Activated CD4-positive, alpha-beta memory T cell treated with anti-CD3 and anti-CD28 coated beads for 36 hours (primary cell): ENCODE measurements at regions of chr20 and their contacts with region 1.

Region 1: DNA sequence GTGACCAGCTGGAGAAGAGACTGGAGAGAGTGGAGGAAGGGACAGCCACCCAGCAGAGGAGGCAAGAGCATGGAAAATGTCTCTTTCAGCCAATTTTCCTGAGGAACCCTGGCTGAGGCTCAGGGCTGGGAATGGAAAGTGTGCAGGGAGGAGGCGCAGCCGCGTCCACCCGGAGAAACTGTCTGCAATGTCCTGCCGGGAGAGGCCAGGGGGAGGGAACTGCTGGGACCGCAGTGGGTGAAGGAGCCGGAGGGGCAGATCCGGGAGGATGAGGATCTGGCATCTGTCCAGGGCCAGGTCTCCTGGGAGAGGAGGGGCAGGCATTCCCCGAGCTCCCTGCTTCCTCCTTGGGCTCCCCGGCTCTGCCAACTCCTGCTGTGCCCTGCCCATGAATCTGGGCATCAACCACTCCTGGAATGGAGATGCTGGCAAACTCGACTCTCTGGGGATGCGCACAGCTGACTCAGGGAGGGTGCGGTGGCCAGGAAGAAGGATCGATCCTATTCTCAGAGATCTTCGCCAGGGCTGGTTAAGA is 17.4 kb upstream of the HM13 start:
- DNase-seq: no peak
- H3K4me3 Mint-ChIP-seq: no peak overlapping the region
- H3K27ac Mint-ChIP-seq: no peak overlapping the region
- H3K4me1 Mint-ChIP-seq: no peaks in the 10 kb centered on the region
- H3K27me3 Mint-ChIP-seq: peaks cover 18% of the 10 kb centered on the region

Region 2: DNA sequence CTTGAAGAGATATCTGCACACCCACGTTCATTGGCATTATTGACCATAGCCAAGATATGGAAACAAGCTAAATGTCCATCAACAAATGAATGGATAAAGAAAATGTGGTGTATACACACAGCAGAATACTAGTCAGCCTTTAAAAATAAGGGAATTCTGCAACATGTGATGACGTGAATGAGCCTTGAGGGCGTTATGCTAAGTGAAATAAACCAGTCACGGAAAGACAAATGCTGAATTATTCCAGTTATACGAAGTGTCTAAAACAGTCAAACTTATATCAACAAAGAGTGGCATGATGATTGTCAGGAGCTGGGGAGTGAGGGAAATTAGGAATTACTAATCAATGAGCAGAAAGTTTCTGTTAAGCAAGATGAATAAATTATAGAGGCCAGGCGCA is 82.4 kb before region 1 on chr20:
- CTCF ChIA-PET with region 1: interaction called, 23 read pairs
- POLR2A ChIA-PET with region 1: no interaction called
- intact Hi-C with region 1: no loop called
- DNase-seq: no peak
- H3K4me3 Mint-ChIP-seq: no peak overlapping the region
- H3K27ac Mint-ChIP-seq: no peak overlapping the region
- H3K4me1 Mint-ChIP-seq: no peaks in the 10 kb centered on the region
- H3K27me3 Mint-ChIP-seq: peaks cover 9% of the 10 kb centered on the region

Region 3: DNA sequence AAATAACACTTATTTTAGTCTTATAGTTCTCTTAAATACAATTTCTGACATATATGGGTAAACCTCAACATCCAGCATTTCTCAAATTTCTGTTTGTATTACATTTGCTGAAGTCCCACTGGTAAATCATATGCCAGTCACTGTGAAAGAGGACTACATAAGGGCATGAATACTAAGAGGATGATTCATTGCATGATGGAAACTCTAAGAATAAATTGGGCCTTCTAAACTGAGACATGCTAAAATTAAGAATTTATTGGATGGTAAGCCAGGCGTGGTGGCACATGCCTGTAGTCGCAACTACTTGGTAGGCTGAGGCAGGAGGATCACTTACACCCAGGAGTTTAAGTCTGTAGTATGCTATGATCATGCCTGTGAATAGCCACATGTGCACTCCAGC is 44.3 kb before region 1 on chr20:
- CTCF ChIA-PET with region 1: interaction called, 188 read pairs
- POLR2A ChIA-PET with region 1: interaction called, 4 read pairs
- intact Hi-C with region 1: no loop called
- DNase-seq: no peak
- H3K4me3 Mint-ChIP-seq: no peak overlapping the region
- H3K27ac Mint-ChIP-seq: no peak overlapping the region
- H3K4me1 Mint-ChIP-seq: no peaks in the 10 kb centered on the region
- H3K27me3 Mint-ChIP-seq: peaks cover 8% of the 10 kb centered on the region

Region 4: DNA sequence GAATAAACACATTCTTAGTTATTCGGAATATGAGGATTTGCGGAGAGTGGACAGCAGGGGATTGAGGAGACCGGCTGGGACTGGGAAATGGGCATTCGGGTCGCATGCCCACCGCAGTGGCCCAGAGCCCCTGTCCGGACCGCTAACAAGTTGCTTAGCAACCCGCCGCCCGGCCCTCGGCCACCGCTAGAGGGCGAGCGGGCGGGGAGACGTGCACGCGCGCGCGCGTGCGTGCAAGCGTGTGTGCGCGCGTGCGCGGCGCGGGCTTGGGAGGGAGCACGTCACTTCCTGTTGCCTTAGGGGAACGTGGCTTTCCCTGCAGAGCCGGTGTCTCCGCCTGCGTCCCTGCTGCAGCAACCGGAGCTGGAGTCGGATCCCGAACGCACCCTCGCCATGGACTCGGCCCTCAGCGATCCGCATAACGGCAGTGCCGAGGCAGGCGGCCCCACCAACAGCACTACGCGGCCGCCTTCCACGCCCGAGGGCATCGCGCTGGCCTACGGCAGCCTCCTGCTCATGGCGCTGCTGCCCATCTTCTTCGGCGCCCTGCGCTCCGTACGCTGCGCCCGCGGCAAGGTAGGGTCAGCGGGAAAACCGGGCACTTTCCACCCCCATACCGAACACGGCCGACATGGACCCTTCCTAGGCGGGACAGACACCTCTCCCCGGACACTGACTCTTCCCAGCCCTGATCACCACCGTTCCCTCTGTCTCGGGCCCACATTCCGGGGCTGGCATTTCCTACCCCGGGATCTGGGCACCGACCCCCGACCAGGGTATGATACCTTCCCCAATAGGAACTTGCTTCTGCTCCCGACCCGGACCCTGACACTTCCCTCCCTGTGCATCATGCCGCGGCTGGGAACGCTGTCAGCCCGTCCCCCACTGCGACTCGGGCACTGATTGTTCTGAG is 17.6 kb after region 1 on chr20 and contains the start of gene HM13:
- CTCF ChIA-PET with region 1: interaction called, 27 read pairs
- POLR2A ChIA-PET with region 1: no interaction called
- intact Hi-C with region 1: no loop called
- DNase-seq: peak; percentile 92
- H3K4me3 Mint-ChIP-seq: no peak within 1 kb of the TSS
- H3K27ac Mint-ChIP-seq: peak within 1 kb of the TSS; percentile 59
- H3K4me1 Mint-ChIP-seq: peaks cover 9% of the 10 kb centered on the region
- H3K27me3 Mint-ChIP-seq: no peaks in the 10 kb centered on the region
- total RNA-seq, gene HM13: 110 to 111 TPM

Region 5: DNA sequence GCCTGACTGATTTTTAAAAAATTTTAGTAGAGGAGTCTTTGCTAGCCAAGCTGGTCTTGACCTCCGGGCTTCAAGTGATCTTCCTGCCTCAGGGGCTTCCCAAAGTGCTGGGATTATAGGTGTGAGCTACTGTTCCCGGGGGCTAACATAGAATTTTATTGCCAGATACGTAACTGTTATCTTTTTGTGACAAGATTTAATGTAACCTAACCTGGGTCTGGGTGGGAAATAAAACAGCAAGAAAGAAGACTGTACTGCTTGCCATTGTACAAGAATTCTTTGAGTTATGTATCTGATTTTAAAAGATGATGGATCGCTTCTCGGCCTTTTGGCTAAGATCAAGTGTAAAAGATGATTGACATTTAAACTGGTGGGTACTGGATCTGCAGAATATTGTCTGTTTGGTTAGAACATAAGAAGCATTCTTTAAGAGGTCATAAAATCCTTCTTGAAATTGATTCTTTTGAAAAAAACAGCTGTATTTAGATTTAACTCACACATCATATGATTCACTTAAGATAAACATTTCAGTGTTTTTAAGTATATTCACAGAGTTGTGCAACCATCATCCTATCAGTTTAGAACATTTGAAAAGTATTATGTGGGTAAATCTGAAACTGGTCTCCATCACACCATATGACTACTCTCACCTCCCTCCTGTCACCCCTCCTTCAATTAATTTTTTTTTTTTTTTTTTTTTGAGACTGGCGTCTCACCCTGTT is 263.9 kb after region 1 on chr20:
- CTCF ChIA-PET with region 1: no interaction called
- POLR2A ChIA-PET with region 1: no interaction called
- intact Hi-C with region 1: no loop called
- DNase-seq: no peak
- H3K4me3 Mint-ChIP-seq: no peak overlapping the region
- H3K27ac Mint-ChIP-seq: no peak overlapping the region
- H3K4me1 Mint-ChIP-seq: peaks cover 2% of the 10 kb centered on the region
- H3K27me3 Mint-ChIP-seq: no peaks in the 10 kb centered on the region